Mucosa of descending colon (tissue), 3 donors: ENCODE measurements at regions of chr6 and their contacts with region 1.

Region 1: DNA sequence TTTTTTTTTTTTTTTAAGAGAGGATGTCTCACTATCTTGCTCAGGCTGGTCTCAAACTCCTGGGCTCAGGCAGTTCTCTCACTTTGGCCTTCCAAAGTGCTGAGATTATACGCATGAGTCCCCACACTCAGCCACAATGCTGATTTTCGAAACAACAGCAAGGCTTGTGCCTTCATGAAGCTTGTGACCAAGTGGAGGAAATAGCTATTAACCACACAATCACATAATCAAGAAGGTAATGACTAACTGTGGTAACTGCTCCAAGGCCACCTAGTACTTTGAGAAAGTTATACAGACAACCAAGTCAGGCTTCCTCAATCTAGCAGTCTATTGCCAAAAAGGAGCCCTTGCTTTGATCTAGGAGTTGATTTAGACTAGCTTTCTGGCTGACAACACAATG is 46.3 kb downstream of the SOD2 start:
- DNase-seq: no peak
- ATAC-seq: no peak
- H3K4me3 ChIP-seq: no peak overlapping the region
- H3K4me1 ChIP-seq: no peaks in the 10 kb centered on the region
- CTCF ChIP-seq: no peak

Region 2: DNA sequence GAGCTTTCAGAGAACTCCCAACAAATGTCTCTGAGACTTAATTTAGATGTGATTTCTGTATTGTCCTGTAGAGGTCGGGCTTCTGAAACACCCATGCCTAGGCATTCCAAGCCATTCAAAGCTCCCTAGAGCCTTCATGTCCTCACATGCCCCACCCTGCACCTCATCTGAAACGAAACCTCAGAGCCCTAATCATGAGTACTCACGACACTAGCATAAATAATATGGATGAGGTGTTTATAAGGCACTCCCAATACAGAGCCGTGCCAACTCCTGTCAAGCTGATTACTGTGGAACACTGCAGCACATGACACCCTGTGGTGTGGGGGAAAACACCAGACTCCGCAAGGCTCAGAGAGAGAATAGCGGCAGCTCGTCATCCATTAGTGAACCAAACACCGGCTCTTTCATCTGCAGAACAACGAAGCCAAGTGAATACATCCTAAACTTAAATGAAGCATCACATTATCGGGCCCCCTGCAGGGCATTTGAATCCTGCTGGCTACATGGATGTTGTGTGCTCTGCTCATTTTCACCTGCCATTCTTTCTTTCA is 393.7 kb before region 1 on chr6:
- intact Hi-C with region 1: loop called in 1 of 2 experiments (anchors 10 kb)
- DNase-seq: peak in 1 of 3 donors; percentile 12
- ATAC-seq: peak; percentile 64
- H3K4me3 ChIP-seq: no peak overlapping the region
- H3K4me1 ChIP-seq: no peaks in the 10 kb centered on the region
- CTCF ChIP-seq: no peak